Transverse colon (tissue), 4 donors: ENCODE measurements at regions of chr2 and their contacts with region 1.

Region 1: DNA sequence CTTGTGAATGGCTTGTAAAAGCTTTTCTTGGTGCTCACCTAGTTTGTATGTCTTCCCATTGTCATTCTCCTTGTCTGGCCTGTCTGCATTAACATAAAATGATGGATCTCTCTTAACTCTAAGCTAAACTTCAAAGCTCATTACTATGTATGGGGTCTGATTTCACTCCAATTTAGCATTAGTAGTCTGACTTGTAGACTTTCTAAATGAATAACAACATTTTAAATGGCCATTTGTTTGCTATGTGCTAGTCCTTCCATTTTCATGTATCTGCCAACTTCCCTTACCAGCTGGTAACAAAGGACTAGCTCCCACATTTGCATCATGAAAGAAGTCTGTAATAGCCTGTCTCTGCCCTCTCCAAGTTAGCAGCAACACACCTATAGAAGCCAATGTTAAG is 324.2 kb upstream of the RGPD4 start:
- DNase-seq: no peak
- H3K4me3 ChIP-seq: no peak overlapping the region
- H3K27ac ChIP-seq: no peak overlapping the region
- H3K4me1 ChIP-seq: no peaks in the 10 kb centered on the region
- H3K27me3 ChIP-seq: no peaks in the 10 kb centered on the region
- CTCF ChIP-seq: no peak
- EP300 ChIP-seq: no peak
- POLR2A ChIP-seq: no peak

Region 2: GRCh38 chr2:107545066-107545465 is 42.5 kb after region 1 on chr2:
- in situ Hi-C with region 1: no loop called
- intact Hi-C with region 1: loop called (anchors 2 kb)
- DNase-seq: no peak
- H3K4me3 ChIP-seq: no peak overlapping the region
- H3K27ac ChIP-seq: no peak overlapping the region
- H3K4me1 ChIP-seq: no peaks in the 10 kb centered on the region
- H3K27me3 ChIP-seq: no peaks in the 10 kb centered on the region
- CTCF ChIP-seq: no peak
- EP300 ChIP-seq: no peak
- POLR2A ChIP-seq: no peak